Activated naive CD4-positive, alpha-beta T cell treated with anti-CD3 and anti-CD28 coated beads for 36 hours (primary cell): ENCODE measurements at regions of chr11 and their contacts with region 1.

Region 1: GRCh38 chr11:65329944-65330403 is 3.7 kb upstream of the DPF2 start:
- DNase-seq: peak; percentile 96
- H3K4me3 Mint-ChIP-seq: no peak overlapping the region
- H3K27ac Mint-ChIP-seq: no peak overlapping the region
- H3K4me1 Mint-ChIP-seq: peaks cover 11% of the 10 kb centered on the region
- H3K27me3 Mint-ChIP-seq: no peaks in the 10 kb centered on the region

Region 2: GRCh38 chr11:65111744-65112414 is 218.1 kb before region 1 on chr11 and contains the start of gene TM7SF2:
- CTCF ChIA-PET with region 1: interaction called, 7 read pairs
- intact Hi-C with region 1: loop called (anchors 5 kb)
- DNase-seq: peak; percentile 96
- H3K4me3 Mint-ChIP-seq: peak within 1 kb of the TSS; percentile 80
- H3K27ac Mint-ChIP-seq: peak within 1 kb of the TSS; percentile 72
- H3K4me1 Mint-ChIP-seq: peaks cover 51% of the 10 kb centered on the region
- H3K27me3 Mint-ChIP-seq: no peaks in the 10 kb centered on the region
- total RNA-seq, gene TM7SF2: 10.9 to 11.9 TPM

Region 3: DNA sequence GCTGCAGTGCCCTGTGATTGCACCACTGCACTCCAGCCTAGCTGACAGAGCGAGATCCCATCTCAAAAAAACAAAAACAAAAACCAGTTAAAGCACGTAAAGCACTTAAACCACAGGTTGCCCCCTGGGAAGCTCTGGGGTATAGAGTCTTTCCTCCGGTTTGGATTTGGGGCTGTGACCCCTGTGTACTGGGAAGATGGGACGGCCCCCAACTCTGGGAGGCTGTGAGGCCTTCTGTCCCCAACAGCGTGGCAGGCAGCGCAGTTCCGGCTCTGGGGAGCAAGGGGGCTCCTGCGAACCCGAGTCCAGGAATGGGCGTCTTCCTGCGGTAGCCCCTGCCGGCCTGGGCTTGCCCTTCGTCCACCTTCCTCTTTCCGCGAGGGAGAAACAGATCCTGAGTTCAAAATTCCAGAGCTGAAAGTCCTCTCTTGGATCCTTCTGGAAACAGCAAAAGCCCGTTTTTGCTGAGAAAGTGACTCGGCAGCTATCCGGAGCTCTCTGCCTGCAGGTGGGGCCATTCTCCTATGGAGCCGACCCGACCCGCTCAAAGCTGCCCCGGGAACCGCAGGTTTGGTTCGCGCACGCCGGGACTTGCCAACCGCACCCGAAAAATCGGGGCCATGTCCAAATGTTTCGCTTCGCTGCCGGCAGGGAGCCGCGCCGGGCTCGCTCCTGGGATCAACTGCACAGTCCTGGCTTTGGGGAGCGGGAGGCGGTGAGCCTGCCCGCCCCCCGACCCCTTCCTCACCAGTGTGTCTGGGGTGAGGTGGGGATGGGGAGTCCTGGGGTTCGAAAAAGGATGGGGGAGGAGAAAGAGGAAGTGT is 104.5 kb before region 1 on chr11:
- CTCF ChIA-PET with region 1: interaction called, 73 read pairs
- intact Hi-C with region 1: loop called (anchors 1 kb)
- DNase-seq: peak; percentile 81
- H3K4me3 Mint-ChIP-seq: peak overlapping the region; percentile 74
- H3K27ac Mint-ChIP-seq: no peak overlapping the region
- H3K4me1 Mint-ChIP-seq: peaks cover 11% of the 10 kb centered on the region
- H3K27me3 Mint-ChIP-seq: peaks cover 18% of the 10 kb centered on the region

Region 4: GRCh38 chr11:65274735-65275682 is 55.0 kb before region 1 on chr11:
- CTCF ChIA-PET with region 1: interaction called, 6 read pairs
- intact Hi-C with region 1: loop called (anchors 5 kb)
- DNase-seq: peak; percentile 53
- H3K4me3 Mint-ChIP-seq: no peak overlapping the region
- H3K27ac Mint-ChIP-seq: no peak overlapping the region
- H3K4me1 Mint-ChIP-seq: peaks cover 15% of the 10 kb centered on the region
- H3K27me3 Mint-ChIP-seq: no peaks in the 10 kb centered on the region

Region 5: DNA sequence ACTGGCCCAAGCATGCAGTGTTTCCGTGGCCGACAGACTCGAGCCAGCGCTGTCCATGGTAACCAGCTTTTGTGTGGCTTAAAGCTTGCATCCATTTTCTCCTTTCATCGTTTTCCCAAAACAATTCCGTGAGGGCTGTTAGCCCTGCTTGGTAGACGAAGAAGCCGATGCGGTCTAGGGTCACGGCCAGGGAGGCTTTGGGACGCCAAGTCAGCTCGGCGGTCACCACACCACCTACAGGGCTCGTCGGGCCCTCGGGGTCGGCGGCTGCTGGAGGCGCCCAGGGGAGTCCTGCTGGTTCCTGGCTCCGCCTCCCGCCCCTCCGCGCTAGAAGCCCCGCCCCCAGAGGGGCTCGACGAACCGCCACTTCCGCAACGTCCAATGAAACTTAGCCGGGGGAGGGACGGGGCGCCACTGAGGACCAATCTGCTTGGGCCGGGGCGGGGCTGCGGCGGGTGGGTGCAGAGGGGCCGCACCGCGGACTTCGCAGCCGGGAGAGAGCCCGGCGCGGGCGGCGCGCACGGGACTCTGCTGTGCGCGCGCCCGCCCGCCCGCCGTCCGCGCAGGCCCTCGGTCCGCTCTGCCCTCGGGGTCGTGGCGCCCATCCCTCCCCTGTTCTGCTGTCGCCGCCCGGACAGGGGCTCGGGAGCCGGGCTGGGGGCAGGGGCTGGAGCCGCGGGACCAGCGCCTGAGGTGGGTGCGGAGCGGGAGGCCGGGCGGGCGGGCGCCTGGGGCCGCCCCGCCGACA is 24.5 kb after region 1 on chr11 and contains the start of gene TIGD3:
- CTCF ChIA-PET with region 1: interaction called, 12 read pairs
- intact Hi-C with region 1: loop called (anchors 2 kb)
- DNase-seq: peak; percentile 97
- H3K4me3 Mint-ChIP-seq: peak within 1 kb of the TSS; percentile 84
- H3K27ac Mint-ChIP-seq: peak within 1 kb of the TSS; percentile 67
- H3K4me1 Mint-ChIP-seq: peaks cover 11% of the 10 kb centered on the region
- H3K27me3 Mint-ChIP-seq: no peaks in the 10 kb centered on the region
- total RNA-seq, gene TIGD3: 0.32 to 0.62 TPM